AG04450 (cell line): ENCODE measurements at regions of chr10 and their contacts with region 1.

Region 1: DNA sequence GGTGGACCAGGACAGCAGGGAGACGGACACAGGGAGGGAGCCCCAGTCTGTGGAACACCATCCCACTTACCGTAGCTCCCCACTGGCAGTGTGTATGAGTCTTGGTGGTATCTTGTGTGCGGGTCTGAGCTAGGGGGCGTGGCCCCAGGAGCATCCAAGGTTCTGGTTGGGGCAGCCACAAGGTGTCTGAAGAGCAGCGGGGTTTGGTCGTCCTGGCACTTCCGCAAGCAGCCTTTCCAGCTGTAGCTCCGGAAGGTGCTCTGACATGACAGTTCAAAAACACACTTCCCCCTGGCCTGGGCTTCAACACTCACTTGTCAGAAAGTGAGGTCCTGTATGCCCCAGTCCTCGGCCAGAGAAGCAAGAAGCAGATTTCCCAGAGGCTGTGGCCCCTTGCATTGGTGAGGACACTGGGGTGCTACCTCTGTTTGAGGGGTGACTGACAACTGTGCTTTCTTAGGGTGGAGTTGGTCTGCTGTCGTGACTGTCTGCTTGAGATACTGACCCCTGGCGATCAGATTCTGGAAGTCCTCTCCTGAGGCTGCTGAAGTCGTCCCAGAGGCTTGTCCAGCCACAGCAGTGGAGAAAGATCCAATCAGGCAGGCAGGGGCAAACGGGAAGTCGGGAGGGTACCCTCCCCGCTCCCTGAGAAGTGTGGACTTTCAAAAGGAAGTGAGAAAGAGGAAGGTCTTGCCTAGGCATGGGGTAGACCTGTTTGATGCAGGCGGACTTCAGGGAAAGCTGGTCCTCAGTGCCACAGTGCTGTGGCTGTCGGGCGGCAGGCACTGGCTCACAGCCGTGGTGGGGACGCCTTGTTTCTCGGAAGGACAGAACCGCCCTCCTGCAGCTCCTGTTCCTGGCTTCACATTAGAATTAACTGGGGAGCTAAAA is 51.4 kb upstream of the PFKFB3 start:
- DNase-seq: no peak
- H3K4me3 ChIP-seq: no peak overlapping the region
- H3K27ac ChIP-seq: peak overlapping the region; percentile 21
- H3K27me3 ChIP-seq: no peaks in the 10 kb centered on the region
- CTCF ChIP-seq: peak; percentile 83

Region 2: DNA sequence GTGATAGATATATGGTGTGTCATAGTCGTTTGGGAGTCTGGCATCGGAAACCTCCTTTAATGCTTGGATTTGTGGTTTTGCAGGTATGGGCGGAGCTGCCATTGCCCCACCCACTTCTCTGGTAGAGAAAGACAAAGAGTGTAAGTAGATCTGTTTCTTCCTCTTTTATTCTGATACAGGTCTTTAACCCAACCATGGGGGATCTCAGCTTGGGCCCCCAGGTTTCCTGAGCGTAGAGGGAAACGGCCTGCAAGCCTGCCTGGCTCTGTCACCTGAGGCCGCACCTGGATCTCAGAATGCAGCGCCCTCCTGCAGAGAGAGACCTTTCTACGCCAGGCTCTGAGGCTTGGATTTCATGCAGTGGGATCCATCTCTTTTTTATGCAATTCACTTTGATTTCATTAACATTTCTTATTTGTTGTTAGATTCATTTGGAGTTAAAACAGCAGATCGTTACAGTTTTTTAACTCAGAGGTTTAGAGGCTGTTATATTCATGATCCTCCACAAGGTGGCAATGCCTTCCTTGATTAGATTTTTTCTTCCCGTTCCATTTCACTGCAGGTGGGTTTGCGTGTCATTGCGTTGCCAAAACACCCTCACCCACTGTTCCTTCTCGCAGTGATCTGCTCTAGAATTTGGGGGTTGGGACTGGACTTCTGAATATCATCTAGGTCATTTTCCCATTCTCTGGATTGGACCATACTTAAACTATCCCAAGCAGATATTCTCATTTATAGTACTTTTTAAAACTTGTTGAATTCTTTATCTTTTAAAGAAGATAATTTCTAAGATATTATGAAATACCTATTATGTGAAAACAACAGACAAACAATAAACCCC is 42.5 kb before region 1 on chr10:
- CTCF ChIA-PET with region 1: interaction called, 17 read pairs
- POLR2A ChIA-PET with region 1: no interaction called
- DNase-seq: no peak
- H3K4me3 ChIP-seq: no peak overlapping the region
- H3K27ac ChIP-seq: no peak overlapping the region
- H3K27me3 ChIP-seq: no peaks in the 10 kb centered on the region
- CTCF ChIP-seq: peak; percentile 74

Region 3: GRCh38 chr10:6136215-6137201 is 14.8 kb before region 1 on chr10:
- CTCF ChIA-PET with region 1: interaction called, 11 read pairs
- POLR2A ChIA-PET with region 1: no interaction called
- DNase-seq: peak; percentile 32
- H3K4me3 ChIP-seq: peak overlapping the region; percentile 37; the same call in 1 of the 2 replicates
- H3K27ac ChIP-seq: peak overlapping the region; percentile 73
- H3K27me3 ChIP-seq: no peaks in the 10 kb centered on the region
- CTCF ChIP-seq: 0 out of 2 replicates have a peak, but pooled peaks have one; percentile 9